Activated CD4-positive, alpha-beta memory T cell treated with anti-CD3 and anti-CD28 coated beads for 36 hours (primary cell): ENCODE measurements at regions of chr6 and their contacts with region 1.

Region 1: GRCh38 chr6:107318100-107318736 is 141.1 kb downstream of the PDSS2 start:
- DNase-seq: peak; percentile 44
- H3K4me3 Mint-ChIP-seq: no peak overlapping the region
- H3K27ac Mint-ChIP-seq: no peak overlapping the region
- H3K4me1 Mint-ChIP-seq: peaks cover 18% of the 10 kb centered on the region
- H3K27me3 Mint-ChIP-seq: no peaks in the 10 kb centered on the region

Region 2: GRCh38 chr6:107634324-107635056 is 316.3 kb after region 1 on chr6:
- CTCF ChIA-PET with region 1: no interaction called
- POLR2A ChIA-PET with region 1: no interaction called
- intact Hi-C with region 1: loop called (anchors 10 kb)
- DNase-seq: no peak
- H3K4me3 Mint-ChIP-seq: peak overlapping the region; percentile 35
- H3K27ac Mint-ChIP-seq: no peak overlapping the region
- H3K4me1 Mint-ChIP-seq: peaks cover 4% of the 10 kb centered on the region
- H3K27me3 Mint-ChIP-seq: peaks cover 61% of the 10 kb centered on the region